ENCODE measurements at regions of chrX and their contacts with region 1.

Region 1: DNA sequence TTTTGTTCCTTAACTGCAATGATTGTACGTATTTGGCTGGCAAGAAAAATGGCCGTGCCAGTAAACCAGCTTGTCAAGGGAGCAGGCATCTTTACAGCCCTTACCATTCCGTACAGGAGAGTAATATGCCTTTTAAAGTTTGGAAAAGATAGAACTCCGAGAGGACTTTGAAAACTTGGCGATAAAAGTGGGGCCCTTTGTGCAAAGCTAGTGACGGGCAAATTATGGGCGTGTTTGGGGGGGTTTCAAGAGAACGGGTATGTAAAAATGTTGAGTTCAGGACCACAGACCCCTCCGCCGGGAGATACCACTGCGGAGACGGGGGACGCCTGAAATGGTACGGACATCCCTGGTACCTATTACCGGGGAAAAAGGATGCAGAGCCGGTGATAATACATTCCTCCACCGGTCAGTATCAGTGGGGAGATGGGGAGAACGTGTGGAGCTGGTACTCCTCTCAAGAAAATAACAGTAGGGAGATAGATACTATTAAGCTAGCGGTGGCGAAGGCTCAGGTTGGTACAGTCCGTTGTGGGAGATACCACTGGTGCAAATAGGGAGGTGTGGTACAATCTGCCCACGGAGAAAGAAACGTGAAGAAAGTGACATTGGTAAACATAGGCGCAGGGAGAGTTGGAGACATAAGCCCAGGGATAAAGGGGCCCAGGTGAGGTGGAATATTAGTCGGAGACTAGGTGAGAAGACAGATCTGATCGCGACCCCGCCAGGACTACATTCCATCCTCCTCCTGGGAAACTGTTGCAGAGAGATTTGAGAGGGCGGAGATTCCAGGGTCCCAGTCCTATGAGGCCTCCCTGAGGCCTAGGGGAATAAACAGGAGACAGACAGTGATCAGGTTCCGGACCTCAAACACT is 14.5 kb downstream of the SPACA5 start:
- H3K4me3 Mint-ChIP-seq: peak overlapping the region; percentile 95
- H3K27ac Mint-ChIP-seq: peak overlapping the region; percentile 98
- H3K4me1 Mint-ChIP-seq: peaks cover 5% of the 10 kb centered on the region
- H3K27me3 Mint-ChIP-seq: no peaks in the 10 kb centered on the region

Region 2: DNA sequence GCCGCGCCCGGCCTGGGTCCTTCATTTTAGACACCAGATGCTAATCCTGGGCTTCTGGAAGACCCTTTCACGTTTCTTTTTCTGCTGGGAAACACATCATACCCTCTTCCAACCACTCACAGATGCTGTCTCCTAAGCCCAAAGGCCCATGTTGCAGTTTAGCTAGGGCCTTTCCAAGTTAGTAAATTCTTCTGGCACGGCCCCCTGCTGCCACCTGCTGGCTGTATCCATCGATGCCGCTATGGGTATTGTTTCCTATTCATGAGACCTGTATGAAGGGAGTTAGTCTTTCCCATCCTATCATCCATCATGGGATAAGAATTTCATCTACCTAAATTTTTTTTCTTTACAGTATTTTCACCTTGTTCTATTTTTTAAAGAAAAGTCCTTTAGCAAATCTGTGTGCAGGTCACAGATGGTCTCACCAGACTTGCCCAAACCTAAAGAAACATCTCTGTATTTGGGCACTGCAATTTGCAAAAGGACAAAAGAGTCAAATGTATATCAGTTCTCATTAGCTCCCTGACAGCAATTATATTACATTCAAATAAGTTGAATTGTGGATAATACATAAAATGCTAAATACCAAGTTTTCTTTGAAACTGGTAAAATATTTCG is 1224.6 kb before region 1 on chrX:
- intact Hi-C with region 1: no loop called
- H3K4me3 Mint-ChIP-seq: no peak overlapping the region
- H3K27ac Mint-ChIP-seq: no peak overlapping the region
- H3K4me1 Mint-ChIP-seq: peaks cover 11% of the 10 kb centered on the region
- H3K27me3 Mint-ChIP-seq: no peaks in the 10 kb centered on the region

Region 3: DNA sequence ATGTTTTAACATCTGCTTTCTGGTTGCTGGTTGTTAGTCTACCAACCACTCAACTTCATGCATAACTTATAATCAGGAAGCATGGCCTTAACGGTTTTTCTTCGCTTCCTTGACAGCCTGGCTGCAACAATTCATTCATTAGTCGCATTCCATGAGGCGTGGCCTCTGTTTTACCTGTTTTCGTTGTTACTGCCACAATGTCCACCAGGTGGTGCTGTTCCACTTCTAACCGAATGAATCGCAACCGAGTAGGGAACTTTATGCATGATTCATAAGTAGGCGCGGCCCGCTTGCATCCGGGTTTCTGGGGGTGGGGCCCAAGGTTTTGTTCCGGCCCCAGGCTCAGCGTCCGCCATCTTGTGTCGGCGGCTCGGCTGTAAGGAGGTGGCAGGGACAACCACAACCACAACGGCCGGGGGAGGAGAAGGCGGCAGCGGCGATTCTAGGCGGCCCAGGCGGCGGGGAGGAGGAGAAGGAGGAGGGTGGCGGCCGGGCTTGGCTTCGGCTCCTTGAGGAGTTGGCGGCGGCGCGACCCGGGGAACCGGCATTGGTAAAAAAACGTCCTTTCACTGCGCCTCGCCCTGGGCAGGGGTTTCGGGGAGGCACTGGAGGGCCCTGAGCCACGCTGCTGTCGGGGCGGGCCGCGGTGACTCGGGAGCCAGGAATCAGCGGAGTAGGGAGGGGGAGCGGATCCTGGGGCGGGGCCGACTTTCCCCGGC is 827.6 kb before region 1 on chrX and contains the start of gene UBA1:
- intact Hi-C with region 1: loop called (anchors 5 kb)
- H3K4me3 Mint-ChIP-seq: peak within 1 kb of the TSS; percentile 89
- H3K27ac Mint-ChIP-seq: peak within 1 kb of the TSS; percentile 95
- H3K4me1 Mint-ChIP-seq: peaks cover 45% of the 10 kb centered on the region
- H3K27me3 Mint-ChIP-seq: no peaks in the 10 kb centered on the region

Region 4: GRCh38 chrX:47413179-47413594 is 608.1 kb before region 1 on chrX:
- intact Hi-C with region 1: no loop called
- H3K4me3 Mint-ChIP-seq: no peak overlapping the region
- H3K27ac Mint-ChIP-seq: no peak overlapping the region
- H3K4me1 Mint-ChIP-seq: no peaks in the 10 kb centered on the region
- H3K27me3 Mint-ChIP-seq: no peaks in the 10 kb centered on the region

Region 5: GRCh38 chrX:47560831-47561652 is 460.2 kb before region 1 on chrX and contains the start of gene ARAF:
- intact Hi-C with region 1: loop called (anchors 10 kb)
- H3K4me3 Mint-ChIP-seq: peak within 1 kb of the TSS; percentile 89
- H3K27ac Mint-ChIP-seq: peak within 1 kb of the TSS; percentile 96
- H3K4me1 Mint-ChIP-seq: peaks cover 44% of the 10 kb centered on the region
- H3K27me3 Mint-ChIP-seq: no peaks in the 10 kb centered on the region

Region 6: GRCh38 chrX:47650164-47651042 is 370.9 kb before region 1 on chrX and contains the start of gene ELK1:
- intact Hi-C with region 1: loop called (anchors 10 kb)
- H3K4me3 Mint-ChIP-seq: peak within 1 kb of the TSS; percentile 81
- H3K27ac Mint-ChIP-seq: peak within 1 kb of the TSS; percentile 89
- H3K4me1 Mint-ChIP-seq: peaks cover 57% of the 10 kb centered on the region
- H3K27me3 Mint-ChIP-seq: no peaks in the 10 kb centered on the region

Region 7: GRCh38 chrX:47836164-47837072 is 184.8 kb before region 1 on chrX and contains the start of gene ZNF81:
- intact Hi-C with region 1: loop called (anchors 1 kb)
- H3K4me3 Mint-ChIP-seq: peak within 1 kb of the TSS; percentile 100
- H3K27ac Mint-ChIP-seq: peak within 1 kb of the TSS; percentile 92
- H3K4me1 Mint-ChIP-seq: no peaks in the 10 kb centered on the region
- H3K27me3 Mint-ChIP-seq: no peaks in the 10 kb centered on the region

Region 8: DNA sequence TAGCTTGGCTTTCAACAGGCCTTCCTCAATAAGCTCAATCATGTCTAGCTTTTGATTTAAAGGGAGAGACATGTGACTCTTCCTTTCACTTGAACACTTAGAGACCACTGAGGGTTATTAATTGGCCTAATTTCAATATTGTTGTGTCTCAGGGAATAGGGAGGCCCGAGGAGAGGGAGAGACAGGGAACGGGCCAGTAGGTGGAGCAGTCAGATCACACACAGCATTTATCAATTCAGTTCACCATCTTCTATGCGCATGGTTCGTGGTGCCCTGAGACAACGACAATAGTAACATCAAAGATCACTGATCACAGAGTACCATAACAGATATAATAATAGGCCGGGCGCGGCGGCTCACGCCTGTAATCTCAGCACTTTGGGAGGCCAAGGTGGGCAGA is 166.8 kb before region 1 on chrX:
- intact Hi-C with region 1: loop called (anchors 1 kb)
- H3K4me3 Mint-ChIP-seq: no peak overlapping the region
- H3K27ac Mint-ChIP-seq: no peak overlapping the region
- H3K4me1 Mint-ChIP-seq: peaks cover 3% of the 10 kb centered on the region
- H3K27me3 Mint-ChIP-seq: no peaks in the 10 kb centered on the region

Region 9: DNA sequence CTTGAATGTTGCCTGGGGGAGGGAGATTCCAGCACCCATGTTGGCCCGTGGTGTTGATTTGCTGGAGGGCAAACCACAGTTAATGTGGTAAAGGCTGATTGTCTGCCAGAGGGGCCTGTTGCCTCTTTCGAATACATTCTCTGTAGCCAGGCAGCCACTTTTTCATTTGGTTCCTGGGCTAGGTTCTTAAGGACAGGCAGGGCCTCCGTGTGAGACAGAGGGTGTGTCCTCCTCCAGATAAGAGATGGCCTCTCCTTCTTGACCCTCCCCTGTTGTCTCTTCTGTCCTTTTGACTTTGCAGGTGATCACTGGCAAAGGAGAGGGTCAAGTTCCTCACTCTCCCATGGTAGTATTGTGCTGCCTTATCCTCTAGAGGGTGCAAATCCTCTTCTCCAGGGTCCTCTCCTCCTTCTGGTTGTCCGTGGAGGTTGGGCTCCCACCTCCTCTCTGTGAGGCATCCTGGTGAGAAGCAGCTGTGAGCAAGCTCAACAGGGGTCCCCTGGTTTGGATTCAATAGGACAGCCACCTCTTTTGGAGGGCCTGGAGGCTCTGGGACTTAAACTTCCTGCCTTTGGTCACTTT is 62.4 kb before region 1 on chrX:
- intact Hi-C with region 1: loop called (anchors 5 kb)
- H3K4me3 Mint-ChIP-seq: no peak overlapping the region
- H3K27ac Mint-ChIP-seq: no peak overlapping the region
- H3K4me1 Mint-ChIP-seq: peaks cover 7% of the 10 kb centered on the region
- H3K27me3 Mint-ChIP-seq: no peaks in the 10 kb centered on the region